Right ventricle myocardium inferior (tissue), 1 donor: ENCODE measurements at regions of chr12 and their contacts with region 1.

Region 1: GRCh38 chr12:14257734-14258574 is 107.5 kb upstream of the ATF7IP start:
- DNase-seq: no peak
- ATAC-seq: peak; percentile 86

Region 2: GRCh38 chr12:14365294-14366208 is 107.6 kb after region 1 on chr12 and contains the start of gene ATF7IP:
- intact Hi-C with region 1: loop called (anchors 1 kb)
- DNase-seq: peak; percentile 97
- ATAC-seq: peak; percentile 98
- total RNA-seq, gene ATF7IP: 57.1 TPM

Region 3: DNA sequence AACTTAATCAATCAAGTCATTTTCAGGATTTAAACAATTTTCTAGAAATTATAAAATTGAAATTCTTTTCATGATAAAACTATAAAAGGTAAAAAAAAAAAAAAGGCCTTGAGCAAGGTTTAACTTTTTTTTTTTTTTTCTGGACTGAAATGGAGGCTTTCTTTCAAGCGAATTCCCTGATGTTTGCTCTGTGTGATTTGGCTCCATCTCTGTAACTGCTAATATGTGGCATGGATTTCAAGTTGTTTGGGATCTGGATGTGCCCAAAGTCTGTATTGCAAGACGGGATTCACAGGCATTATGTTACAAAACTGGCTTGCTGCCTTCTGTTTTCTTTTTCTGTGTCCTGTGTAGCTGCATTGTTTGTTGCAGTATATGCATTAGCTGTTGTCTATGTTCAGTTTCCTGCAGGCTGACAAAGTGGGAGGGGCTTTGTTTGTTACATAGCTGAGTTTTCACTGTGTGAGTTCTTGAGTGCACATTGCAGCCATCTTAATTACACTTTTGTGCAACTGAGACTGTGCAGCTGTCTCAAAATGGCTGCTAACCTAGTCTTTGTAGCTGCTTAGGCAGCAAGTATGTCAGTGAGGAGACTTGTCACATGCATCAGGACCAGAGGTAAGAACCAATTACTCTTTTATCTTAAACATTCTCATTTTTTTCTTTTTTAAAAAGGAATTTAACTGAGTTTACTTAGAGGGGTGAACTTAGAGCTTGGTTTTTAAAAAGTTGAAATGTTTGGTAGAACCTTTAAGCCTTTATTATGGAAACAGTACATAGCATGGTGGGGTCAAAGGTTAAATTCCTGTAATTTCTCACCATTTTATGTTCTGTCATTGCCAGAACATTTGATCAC is 127.1 kb after region 1 on chr12:
- intact Hi-C with region 1: loop called (anchors 2 kb)
- DNase-seq: no peak
- ATAC-seq: peak; percentile 95

Region 4: GRCh38 chr12:14417715-14418114 is 159.8 kb after region 1 on chr12:
- intact Hi-C with region 1: loop called (anchors 1 kb)
- DNase-seq: peak; percentile 69
- ATAC-seq: peak; percentile 56

Region 5: DNA sequence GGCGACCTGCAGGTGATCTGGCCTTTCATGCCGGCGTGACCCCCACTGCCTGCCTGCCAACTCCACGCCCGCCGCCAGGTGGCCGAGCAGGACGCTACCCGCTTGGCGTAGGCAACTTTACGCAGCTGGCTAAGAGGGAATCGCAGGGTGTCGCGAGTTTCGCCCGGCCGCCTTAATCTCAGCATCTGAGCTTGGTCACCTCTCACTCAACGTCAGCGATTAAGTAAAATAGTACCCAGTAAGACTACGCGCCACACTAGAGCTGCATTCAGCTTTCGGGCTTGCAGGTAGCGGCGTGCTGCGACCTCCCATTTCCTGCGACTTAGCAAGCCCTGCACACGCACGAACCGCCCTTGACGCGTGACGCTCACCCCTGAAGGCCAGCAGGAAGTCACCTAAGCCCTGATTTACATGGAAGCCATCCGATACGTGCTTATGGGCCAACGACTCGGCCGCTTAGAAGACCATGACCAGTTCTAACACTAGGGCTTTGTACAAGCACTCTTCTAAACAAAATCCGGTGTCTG is 512.1 kb after region 1 on chr12:
- intact Hi-C with region 1: loop called (anchors 5 kb)
- DNase-seq: peak; percentile 92
- ATAC-seq: peak; percentile 61